Mammary epithelial cell (primary cell): ENCODE measurements at regions of chr7 and their contacts with region 1.

Region 1: GRCh38 chr7:103025341-103025740 is 49.3 kb downstream of the FBXL13 start:
- DNase-seq: no peak
- H3K4me3 ChIP-seq: no peak overlapping the region
- H3K27ac ChIP-seq: no peak overlapping the region
- H3K4me1 ChIP-seq: no peaks in the 10 kb centered on the region
- H3K27me3 ChIP-seq: no peaks in the 10 kb centered on the region
- CTCF ChIP-seq: no peak

Region 2: GRCh38 chr7:102898532-102898859 is 126.8 kb before region 1 on chr7:
- CTCF ChIA-PET with region 1: interaction called, 10 read pairs
- dilution Hi-C with region 1: no loop called
- in situ Hi-C with region 1: no loop called
- intact Hi-C with region 1: no loop called
- DNase-seq: no peak
- H3K4me3 ChIP-seq: no peak overlapping the region
- H3K27ac ChIP-seq: no peak overlapping the region
- H3K4me1 ChIP-seq: peaks cover 4% of the 10 kb centered on the region
- H3K27me3 ChIP-seq: no peaks in the 10 kb centered on the region
- CTCF ChIP-seq: no peak

Region 3: GRCh38 chr7:103074519-103075336 is 49.4 kb after region 1 on chr7 and contains the starts of genes ARMC10 and FBXL13:
- CTCF ChIA-PET with region 1: no interaction called
- dilution Hi-C with region 1: no loop called
- in situ Hi-C with region 1: no loop called
- intact Hi-C with region 1: no loop called
- DNase-seq: peak; percentile 93
- H3K4me3 ChIP-seq: peak within 1 kb of the TSS; percentile 71 to 97 (median 81)
- H3K27ac ChIP-seq: peak within 1 kb of the TSS; percentile 85
- H3K4me1 ChIP-seq: peaks cover 15% of the 10 kb centered on the region
- H3K27me3 ChIP-seq: no peaks in the 10 kb centered on the region
- CTCF ChIP-seq: peak; percentile 6 to 42
- total RNA-seq, gene ARMC10: 44.2 to 52.7 TPM
- total RNA-seq, gene FBXL13: 0.78 to 1.3 TPM

Region 4: DNA sequence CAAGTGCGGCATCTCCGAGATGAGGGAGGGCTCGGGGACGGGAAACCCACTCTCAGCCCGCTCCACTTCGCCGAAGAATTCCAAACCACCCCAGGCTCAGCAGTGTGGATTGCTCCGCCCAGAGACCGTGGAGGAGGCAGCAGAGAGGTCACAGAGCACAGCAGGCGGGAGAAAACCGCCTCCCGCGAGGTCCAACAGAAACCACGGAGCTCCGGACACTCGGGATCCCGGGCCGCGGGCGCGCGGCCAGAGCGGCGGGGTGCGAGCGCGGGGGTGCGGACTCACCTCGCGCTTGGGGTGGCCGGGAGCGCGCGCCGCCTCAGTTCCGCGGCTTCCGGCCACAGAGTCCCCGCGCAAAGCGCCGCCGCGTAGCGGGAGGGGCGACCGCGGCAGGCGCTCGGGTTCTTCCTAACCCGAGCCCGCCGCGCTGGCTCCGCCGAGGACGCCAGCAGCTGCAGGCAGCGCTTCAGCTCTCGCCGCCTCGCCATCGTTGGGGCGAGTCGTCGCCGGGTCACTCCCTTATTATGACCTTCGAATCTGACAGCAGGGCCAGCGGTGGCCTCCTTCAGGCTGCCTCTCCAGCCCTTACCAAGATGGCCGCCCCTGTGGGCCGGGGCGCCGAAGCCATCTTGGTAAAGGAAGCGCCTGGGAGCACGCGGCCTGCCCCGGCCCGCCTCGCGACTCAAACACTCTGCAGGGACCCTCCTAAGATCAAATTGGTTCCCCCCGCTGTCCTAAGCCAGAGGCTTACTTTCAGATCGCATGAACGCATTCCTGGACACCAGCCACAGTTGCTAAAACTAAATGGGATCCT is 123.9 kb after region 1 on chr7 and contains the start of gene NAPEPLD:
- CTCF ChIA-PET with region 1: no interaction called
- dilution Hi-C with region 1: no loop called
- in situ Hi-C with region 1: no loop called
- intact Hi-C with region 1: no loop called
- DNase-seq: peak; percentile 75
- H3K4me3 ChIP-seq: peak within 1 kb of the TSS; percentile 63 to 86 (median 76)
- H3K27ac ChIP-seq: peak within 1 kb of the TSS; percentile 77
- H3K4me1 ChIP-seq: peaks cover 12% of the 10 kb centered on the region
- H3K27me3 ChIP-seq: no peaks in the 10 kb centered on the region
- CTCF ChIP-seq: no peak
- total RNA-seq, gene NAPEPLD: 5.7 to 11.3 TPM